Ovary (tissue), 10 donors: ENCODE measurements at regions of chr7 and their contacts with region 1.

Region 1: GRCh38 chr7:76020031-76020714 is 25.8 kb upstream of the TMEM120A start:
- DNase-seq: peak; percentile 57 to 82 (median 76)
- H3K4me3 ChIP-seq: no peak overlapping the region
- H3K27ac ChIP-seq: no peak overlapping the region
- H3K4me1 ChIP-seq: no peaks in the 10 kb centered on the region
- H3K27me3 ChIP-seq: no peaks in the 10 kb centered on the region
- CTCF ChIP-seq: peak; percentile 58 to 88 (median 82)
- EP300 ChIP-seq: no peak
- POLR2A ChIP-seq: no peak

Region 2: DNA sequence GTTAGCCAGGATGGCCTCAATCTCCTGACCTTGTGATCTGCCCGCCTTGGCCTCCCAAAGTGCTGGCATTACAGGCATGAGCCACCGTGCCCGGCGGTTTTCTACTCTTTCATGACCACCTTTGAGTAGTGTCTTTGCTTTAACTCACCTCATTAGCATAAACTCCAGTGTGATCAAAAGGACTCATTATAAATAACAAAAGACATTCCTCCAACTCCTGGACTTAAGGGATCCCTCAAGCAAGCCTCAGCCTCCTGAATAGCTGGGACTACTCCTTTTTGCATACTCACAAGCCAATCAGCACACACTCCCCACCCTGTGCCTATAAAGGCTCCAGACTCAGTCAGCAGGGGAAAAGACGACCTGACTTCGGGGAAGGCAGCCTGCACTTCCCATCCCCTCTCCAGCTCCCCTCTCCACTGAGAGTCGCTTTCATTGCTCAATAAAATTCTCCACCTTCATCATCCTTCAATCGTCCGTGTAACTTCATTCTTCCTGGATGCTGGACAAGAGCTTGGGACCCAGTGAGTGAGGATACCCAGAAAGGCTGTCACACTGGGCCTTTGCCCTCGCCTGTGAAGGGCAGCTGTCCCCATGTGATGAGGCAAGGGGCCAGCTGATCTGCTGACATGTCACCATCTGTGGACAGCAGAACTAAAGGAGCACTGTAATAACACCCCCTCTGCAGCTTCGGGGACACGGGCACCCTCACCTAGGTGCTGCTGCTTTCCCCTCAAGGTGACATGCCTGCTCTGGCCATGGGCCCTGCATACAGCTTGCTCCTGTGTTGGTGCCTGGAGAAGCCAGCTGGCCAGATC is 1880.9 kb before region 1 on chr7:
- intact Hi-C with region 1: loop called in 1 of 4 experiments (anchors 5 kb)
- DNase-seq: no peak
- H3K4me3 ChIP-seq: no peak overlapping the region
- H3K27ac ChIP-seq: no peak overlapping the region
- H3K4me1 ChIP-seq: no peaks in the 10 kb centered on the region
- H3K27me3 ChIP-seq: no peaks in the 10 kb centered on the region
- CTCF ChIP-seq: no peak
- EP300 ChIP-seq: no peak
- POLR2A ChIP-seq: no peak

Region 3: DNA sequence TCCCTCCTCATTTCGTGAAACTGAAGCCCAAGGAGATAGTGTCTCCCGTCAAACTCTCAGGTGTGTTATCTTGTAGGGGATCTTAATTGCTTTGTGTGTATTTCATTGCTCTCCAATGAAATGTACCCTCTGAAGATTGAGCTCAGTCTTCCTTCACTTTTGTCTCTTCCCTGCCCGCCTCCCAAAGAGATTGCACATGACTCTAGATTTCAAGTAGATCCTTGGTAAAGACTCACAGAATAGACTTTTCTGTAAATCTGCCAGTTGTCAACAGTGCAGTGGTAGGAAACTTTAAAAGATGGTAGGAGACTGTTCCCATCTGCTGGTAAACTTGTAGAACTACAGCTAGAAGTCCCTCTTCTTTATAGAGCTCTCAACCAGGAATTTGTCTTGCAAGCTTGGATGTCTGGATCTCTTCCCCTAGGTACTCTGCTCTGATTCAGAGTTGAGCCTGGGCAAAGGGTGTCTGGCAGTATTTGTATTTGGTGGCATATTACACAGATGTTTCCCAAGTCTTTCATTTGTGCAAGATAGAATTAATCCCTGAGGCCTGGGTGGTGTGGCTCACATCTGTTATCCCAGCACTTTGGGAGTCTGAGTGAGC is 257.8 kb before region 1 on chr7:
- intact Hi-C with region 1: loop called in 1 of 4 experiments (anchors 10 kb)
- DNase-seq: no peak
- H3K4me3 ChIP-seq: no peak overlapping the region
- H3K27ac ChIP-seq: no peak overlapping the region
- H3K4me1 ChIP-seq: no peaks in the 10 kb centered on the region
- H3K27me3 ChIP-seq: no peaks in the 10 kb centered on the region
- CTCF ChIP-seq: peak; percentile 35 to 75 (median 70)
- EP300 ChIP-seq: no peak
- POLR2A ChIP-seq: no peak

Region 4: GRCh38 chr7:75866489-75867389 is 153.4 kb before region 1 on chr7:
- intact Hi-C with region 1: loop called in 3 of 4 experiments (anchors 1 to 10 kb)
- DNase-seq: peak in 4 of 5 donors; percentile 50 to 66 (median 55)
- H3K4me3 ChIP-seq: no peak overlapping the region
- H3K27ac ChIP-seq: no peak overlapping the region
- H3K4me1 ChIP-seq: peaks cover 6% of the 10 kb centered on the region
- H3K27me3 ChIP-seq: no peaks in the 10 kb centered on the region
- CTCF ChIP-seq: peak; percentile 70 to 88 (median 77)
- EP300 ChIP-seq: no peak
- POLR2A ChIP-seq: no peak

Region 5: DNA sequence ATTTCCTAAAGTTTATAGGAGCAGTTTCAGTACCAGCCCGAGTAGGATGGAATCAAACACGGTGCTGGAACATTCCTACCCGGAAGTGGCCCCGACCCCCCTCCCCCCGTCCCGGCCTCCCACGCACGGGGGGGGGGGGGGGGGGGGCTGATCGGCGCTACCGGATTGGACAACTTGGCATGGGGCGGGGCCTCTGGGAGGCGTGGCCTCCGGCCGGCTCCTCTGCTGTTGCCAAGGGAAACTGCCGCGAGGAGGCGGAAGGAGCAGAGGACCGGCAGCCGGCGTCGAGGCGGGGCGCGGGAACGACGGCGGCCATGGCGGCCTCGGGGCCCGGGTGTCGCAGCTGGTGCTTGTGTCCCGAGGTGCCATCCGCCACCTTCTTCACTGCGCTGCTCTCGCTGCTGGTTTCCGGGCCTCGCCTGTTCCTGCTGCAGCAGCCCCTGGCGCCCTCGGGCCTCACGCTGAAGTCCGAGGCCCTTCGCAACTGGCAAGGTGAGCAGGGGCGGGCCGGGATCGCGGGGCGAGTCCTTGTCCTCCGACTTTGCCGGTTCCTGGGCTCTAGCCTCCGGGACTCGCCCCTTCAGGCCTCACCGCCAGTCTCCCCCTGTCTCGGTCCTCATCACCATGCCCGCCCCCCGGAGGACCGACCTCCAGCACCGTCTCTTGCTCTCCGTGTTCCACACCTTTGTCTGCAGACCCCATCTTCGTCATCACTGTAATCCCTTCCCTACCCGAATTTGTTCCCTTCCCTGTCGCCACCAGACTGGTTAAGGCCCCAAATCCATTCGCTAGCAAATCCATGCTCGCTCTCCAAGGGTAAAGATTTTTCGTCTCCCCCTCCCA is 141.2 kb before region 1 on chr7 and contains the start of gene RHBDD2:
- intact Hi-C with region 1: loop called in 2 of 4 experiments (anchors 5 to 10 kb)
- DNase-seq: peak; percentile 96 to 98 (median 98)
- H3K4me3 ChIP-seq: peak within 1 kb of the TSS; percentile 68
- H3K27ac ChIP-seq: peak within 1 kb of the TSS; percentile 74 to 80
- H3K4me1 ChIP-seq: peaks cover 6% of the 10 kb centered on the region
- H3K27me3 ChIP-seq: no peaks in the 10 kb centered on the region
- CTCF ChIP-seq: peak in 2 of 3 donors; percentile 42 to 49
- EP300 ChIP-seq: no peak
- POLR2A ChIP-seq: peak; percentile 96
- total RNA-seq, gene RHBDD2: 26.6 to 83.2 (median 68.5) TPM